ENCODE measurements at regions of chr11 and their contacts with region 1.

Region 1: GRCh38 chr11:90222459-90223247 is at the start of gene CHORDC1:
- DNase-seq: peak; percentile 77 to 96 (median 92)
- ATAC-seq: peak; percentile 84
- H3K4me3 ChIP-seq: peak within 1 kb of the TSS; percentile 55 to 83
- H3K4me3 Mint-ChIP-seq: peak within 1 kb of the TSS; percentile 96
- H3K27ac ChIP-seq: peak within 1 kb of the TSS; percentile 80 to 92
- H3K27ac Mint-ChIP-seq: peak within 1 kb of the TSS; percentile 95
- H3K4me1 ChIP-seq: peaks cover 36% of the 10 kb centered on the region
- H3K4me1 Mint-ChIP-seq: peaks cover 57% of the 10 kb centered on the region
- H3K27me3 ChIP-seq: no peaks in the 10 kb centered on the region
- H3K27me3 Mint-ChIP-seq: no peaks in the 10 kb centered on the region
- CTCF ChIP-seq: no peak
- total RNA-seq, gene CHORDC1: 83.3 to 83.8 TPM

Region 2: GRCh38 chr11:90204832-90205646 is 17.6 kb before region 1 on chr11:
- CTCF ChIA-PET with region 1: interaction called, 6 read pairs
- POLR2A ChIA-PET with region 1: no interaction called
- intact Hi-C with region 1: loop called in 1 of 2 experiments (anchors 1 kb)
- DNase-seq: peak in 2 of 9 experiments; percentile 60 to 70
- ATAC-seq: peak; percentile 80
- H3K4me3 ChIP-seq: no peak overlapping the region
- H3K4me3 Mint-ChIP-seq: no peak overlapping the region
- H3K27ac ChIP-seq: no peak overlapping the region
- H3K27ac Mint-ChIP-seq: peak overlapping the region; percentile 24
- H3K4me1 ChIP-seq: peaks cover 8% of the 10 kb centered on the region
- H3K4me1 Mint-ChIP-seq: peaks cover 17% of the 10 kb centered on the region
- H3K27me3 ChIP-seq: no peaks in the 10 kb centered on the region
- H3K27me3 Mint-ChIP-seq: no peaks in the 10 kb centered on the region
- CTCF ChIP-seq: peak; percentile 92

Region 3: DNA sequence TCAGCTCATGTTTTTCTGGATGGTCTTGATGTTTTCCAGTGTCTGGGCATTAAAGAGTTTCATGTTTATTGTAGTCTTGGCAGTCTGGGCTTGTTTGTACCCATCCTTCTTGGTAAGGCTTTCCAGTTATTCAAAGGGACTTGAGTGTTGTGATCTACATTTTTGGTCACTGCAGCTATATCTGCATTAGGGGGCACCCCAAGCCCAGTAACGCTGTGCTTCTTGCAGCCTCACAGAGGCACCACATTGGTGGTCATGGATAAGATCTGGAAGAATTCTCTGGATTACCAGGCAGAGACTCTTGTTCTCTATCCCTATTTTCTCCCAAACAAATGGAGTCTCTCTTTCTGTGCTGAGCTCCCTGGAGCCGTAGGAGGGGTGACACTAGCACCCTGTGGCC is 1550.4 kb after region 1 on chr11:
- CTCF ChIA-PET with region 1: no interaction called
- POLR2A ChIA-PET with region 1: no interaction called
- intact Hi-C with region 1: no loop called
- DNase-seq: no peak
- ATAC-seq: no peak
- H3K4me3 ChIP-seq: no peak overlapping the region
- H3K4me3 Mint-ChIP-seq: no peak overlapping the region
- H3K27ac ChIP-seq: no peak overlapping the region
- H3K27ac Mint-ChIP-seq: no peak overlapping the region
- H3K4me1 ChIP-seq: no peaks in the 10 kb centered on the region
- H3K4me1 Mint-ChIP-seq: no peaks in the 10 kb centered on the region
- H3K27me3 ChIP-seq: no peaks in the 10 kb centered on the region
- H3K27me3 Mint-ChIP-seq: no peaks in the 10 kb centered on the region
- CTCF ChIP-seq: no peak